HCT116 (cell line): ENCODE measurements at regions of chr2 and their contacts with region 1.

Region 1: GRCh38 chr2:24084386-24085361 is at the start of gene TP53I3:
- DNase-seq: peak; percentile 74
- ATAC-seq: peak; percentile 91
- H3K4me3 ChIP-seq: peak within 1 kb of the TSS; percentile 71 to 72
- H3K27ac ChIP-seq: peak within 1 kb of the TSS; percentile 95
- H3K4me1 ChIP-seq: peaks cover 11 to 20% of the 10 kb centered on the region in 2 experiments
- H3K27me3 ChIP-seq: no peaks in the 10 kb centered on the region
- CTCF ChIP-seq: peak in 2 of 3 experiments; percentile 84 to 94; a peak in 4 of 6 replicates
- POLR2A ChIP-seq: peak; percentile 48
- RAD21 ChIP-seq: no peak
- total RNA-seq, gene TP53I3: 20.1 TPM

Region 2: DNA sequence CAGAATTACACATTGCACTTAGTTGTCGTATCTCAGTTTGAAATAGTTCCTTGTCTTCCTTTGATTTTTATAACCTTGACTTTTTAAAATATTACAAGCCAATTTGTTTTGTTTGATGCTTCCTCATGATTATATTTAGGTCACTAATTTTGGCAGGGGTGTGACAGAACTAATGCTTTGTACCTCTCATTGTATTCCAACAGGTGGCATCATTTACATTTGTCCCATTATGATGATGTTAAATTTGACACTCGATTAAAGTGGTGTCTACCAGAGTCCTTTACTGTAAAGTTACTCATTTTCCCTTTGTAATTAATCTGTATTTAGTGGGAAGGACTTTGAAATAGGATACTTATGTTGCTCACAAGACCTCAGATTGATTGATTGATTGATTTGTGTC is 96.3 kb before region 1 on chr2:
- CTCF ChIA-PET with region 1: no interaction called
- POLR2A ChIA-PET with region 1: no interaction called
- RAD21 ChIA-PET with region 1: no interaction called
- intact Hi-C with region 1: loop called (anchors 2 kb)
- DNase-seq: no peak
- ATAC-seq: peak; percentile 78
- H3K4me3 ChIP-seq: no peak overlapping the region
- H3K27ac ChIP-seq: no peak overlapping the region
- H3K4me1 ChIP-seq: no peaks in the 10 kb centered on the region
- H3K27me3 ChIP-seq: no peaks in the 10 kb centered on the region
- CTCF ChIP-seq: peak; percentile 39 to 57 (median 56); a peak in 4 of 6 replicates
- POLR2A ChIP-seq: no peak
- RAD21 ChIP-seq: peak; percentile 66

Region 3: DNA sequence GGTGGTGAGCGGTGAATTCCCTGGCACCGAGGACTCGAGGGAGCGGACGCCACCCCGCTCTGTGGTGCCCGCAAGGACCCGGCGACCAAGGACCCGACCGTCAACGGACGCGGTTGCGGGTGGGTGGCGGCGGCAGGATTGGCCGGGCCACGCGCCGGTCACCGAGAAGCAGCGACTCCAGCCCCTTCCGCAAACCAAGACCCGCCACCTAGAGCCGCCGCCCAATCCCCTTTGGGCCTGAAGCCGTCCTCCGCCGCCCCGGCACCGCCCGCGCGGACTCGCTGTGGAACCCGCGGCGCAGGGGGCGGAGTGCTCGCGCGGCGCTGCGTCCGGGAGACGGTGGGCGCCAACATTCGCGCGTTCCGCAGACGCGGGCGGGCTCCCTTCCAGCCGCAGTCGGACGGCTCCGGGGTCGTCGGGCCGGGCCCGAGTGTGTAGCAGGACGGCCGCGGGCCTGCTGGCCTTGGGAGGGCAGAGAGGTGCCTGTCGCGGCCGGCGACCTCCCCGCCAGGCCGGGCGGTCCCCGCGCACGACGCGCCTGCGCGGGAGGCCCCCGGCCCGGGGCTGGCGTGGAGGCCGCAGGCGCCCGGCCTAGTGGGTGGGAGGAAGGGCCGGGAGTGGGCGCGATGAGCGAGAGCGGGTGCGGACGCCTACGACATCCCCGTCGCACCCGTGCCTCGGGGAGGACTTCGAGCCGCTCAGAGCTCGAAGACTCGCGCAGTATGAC is 38.7 kb after region 1 on chr2 and contains the starts of genes FAM228B and PFN4:
- CTCF ChIA-PET with region 1: interaction called, 6 read pairs
- POLR2A ChIA-PET with region 1: interaction called, 5 read pairs
- RAD21 ChIA-PET with region 1: no interaction called
- intact Hi-C with region 1: loop called (anchors 2 kb)
- DNase-seq: peak; percentile 59
- ATAC-seq: peak; percentile 95
- H3K4me3 ChIP-seq: peak within 1 kb of the TSS; percentile 75 to 76
- H3K27ac ChIP-seq: peak within 1 kb of the TSS; percentile 76
- H3K4me1 ChIP-seq: peaks cover 7 to 15% of the 10 kb centered on the region in 2 experiments; a peak in 3 of 4 replicates
- H3K27me3 ChIP-seq: no peaks in the 10 kb centered on the region
- CTCF ChIP-seq: no peak
- POLR2A ChIP-seq: peak; percentile 59
- RAD21 ChIP-seq: no peak
- total RNA-seq, gene FAM228B: 5.6 TPM
- total RNA-seq, gene PFN4: not detected

Region 4: GRCh38 chr2:24164125-24164973 is 79.7 kb after region 1 on chr2:
- CTCF ChIA-PET with region 1: no interaction called
- POLR2A ChIA-PET with region 1: no interaction called
- RAD21 ChIA-PET with region 1: no interaction called
- intact Hi-C with region 1: loop called (anchors 1 kb)
- DNase-seq: peak; percentile 22
- ATAC-seq: peak; percentile 86
- H3K4me3 ChIP-seq: no peak overlapping the region
- H3K27ac ChIP-seq: no peak overlapping the region
- H3K4me1 ChIP-seq: no peaks in the 10 kb centered on the region
- H3K27me3 ChIP-seq: no peaks in the 10 kb centered on the region
- CTCF ChIP-seq: peak; percentile 90 to 99 (median 93)
- POLR2A ChIP-seq: no peak
- RAD21 ChIP-seq: peak; percentile 83

Region 5: DNA sequence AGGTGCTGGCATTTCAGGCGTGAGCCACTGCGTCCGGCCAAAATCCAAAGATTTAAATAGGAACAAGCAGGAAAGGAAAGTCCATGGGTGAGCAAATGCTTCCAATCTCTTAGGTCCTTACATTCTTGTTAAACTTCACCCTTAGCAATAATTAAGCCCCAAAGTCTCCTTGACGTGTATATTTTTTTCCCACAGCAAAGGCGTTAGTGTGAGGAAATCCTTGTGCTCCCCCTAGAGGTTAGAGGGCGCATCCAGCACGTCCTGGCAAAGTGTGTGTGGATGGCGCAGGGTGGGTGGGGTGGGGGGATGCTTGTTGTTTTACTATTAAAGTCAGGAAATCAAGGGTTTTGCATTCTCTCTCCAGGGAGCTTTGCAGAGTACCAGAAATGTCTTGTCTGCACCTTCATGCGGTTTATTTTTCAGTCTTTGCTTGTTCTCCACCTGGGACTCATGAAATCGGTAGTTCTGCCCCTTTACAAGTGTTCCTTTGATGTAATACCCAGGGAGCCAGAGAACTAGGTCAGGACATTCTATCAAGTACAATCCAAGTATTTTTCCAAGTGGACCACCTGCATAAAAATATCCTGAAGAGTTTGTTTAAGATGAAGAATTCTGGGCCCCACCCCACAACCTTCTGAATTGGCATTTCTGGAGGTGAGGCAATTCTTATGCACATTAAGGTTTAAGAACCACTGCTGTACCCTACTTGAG is 297.8 kb after region 1 on chr2:
- CTCF ChIA-PET with region 1: interaction called, 3 read pairs
- POLR2A ChIA-PET with region 1: no interaction called
- RAD21 ChIA-PET with region 1: no interaction called
- intact Hi-C with region 1: loop called (anchors 1 kb)
- DNase-seq: peak; percentile 65
- ATAC-seq: peak; percentile 96
- H3K4me3 ChIP-seq: no peak overlapping the region; a peak in 1 of 4 replicates
- H3K27ac ChIP-seq: no peak overlapping the region
- H3K4me1 ChIP-seq: no peaks in the 10 kb centered on the region
- H3K27me3 ChIP-seq: no peaks in the 10 kb centered on the region
- CTCF ChIP-seq: peak; percentile 57 to 74 (median 67); a peak in 5 of 6 replicates
- POLR2A ChIP-seq: no peak
- RAD21 ChIP-seq: peak; percentile 82

Region 6: DNA sequence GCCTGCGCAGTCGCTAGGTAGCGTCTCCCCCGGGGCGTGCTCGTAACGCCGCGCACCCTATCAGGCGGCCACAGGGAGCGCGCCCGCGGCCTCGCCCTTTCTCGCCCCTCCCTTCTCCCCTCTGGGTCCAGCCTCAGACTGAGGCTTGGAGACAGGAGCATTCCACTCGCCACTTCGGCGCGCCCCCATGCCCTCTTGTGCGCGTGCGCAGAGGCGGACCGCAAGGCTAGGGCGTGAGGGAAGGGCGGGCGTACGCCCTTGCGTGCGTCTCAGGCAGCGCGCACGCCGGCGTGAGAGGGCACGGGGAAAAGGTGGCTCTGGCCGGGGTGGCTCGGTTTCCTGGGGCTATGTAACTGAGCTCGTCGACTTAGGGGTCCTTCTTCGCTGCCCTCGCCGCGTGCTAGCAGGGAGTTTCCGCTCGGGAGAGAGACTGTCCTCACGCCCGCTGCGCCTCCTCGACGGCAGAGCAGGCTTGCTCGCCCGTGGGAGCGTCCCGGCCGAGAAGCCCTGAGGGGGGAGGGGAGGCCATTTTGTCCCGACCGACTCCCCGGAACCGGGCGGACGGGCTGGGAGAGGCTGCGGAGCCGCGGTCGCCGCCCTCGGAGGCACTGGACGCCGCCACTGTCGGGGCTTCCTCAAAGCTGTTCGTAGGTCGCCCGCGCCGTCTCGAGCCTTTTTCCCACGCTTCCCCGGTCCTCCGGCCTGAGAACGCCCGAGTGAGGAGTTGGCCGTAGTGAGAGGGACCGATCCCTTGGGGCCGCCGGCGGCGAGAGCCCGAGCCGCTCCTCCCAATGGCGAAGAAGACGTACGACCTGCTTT is 1949.4 kb after region 1 on chr2 and contains the start of gene RAB10:
- CTCF ChIA-PET with region 1: no interaction called
- POLR2A ChIA-PET with region 1: no interaction called
- RAD21 ChIA-PET with region 1: no interaction called
- intact Hi-C with region 1: no loop called
- DNase-seq: peak; percentile 98
- ATAC-seq: peak; percentile 94
- H3K4me3 ChIP-seq: peak within 1 kb of the TSS; percentile 90 to 99
- H3K27ac ChIP-seq: peak within 1 kb of the TSS; percentile 98
- H3K4me1 ChIP-seq: peaks cover 12 to 33% of the 10 kb centered on the region in 2 experiments
- H3K27me3 ChIP-seq: no peaks in the 10 kb centered on the region
- CTCF ChIP-seq: no peak
- POLR2A ChIP-seq: peak; percentile 76
- RAD21 ChIP-seq: no peak
- total RNA-seq, gene RAB10: 167 TPM